CD4-positive, alpha-beta T cell (primary cell): ENCODE measurements at regions of chr12 and their contacts with region 1.

Region 1: DNA sequence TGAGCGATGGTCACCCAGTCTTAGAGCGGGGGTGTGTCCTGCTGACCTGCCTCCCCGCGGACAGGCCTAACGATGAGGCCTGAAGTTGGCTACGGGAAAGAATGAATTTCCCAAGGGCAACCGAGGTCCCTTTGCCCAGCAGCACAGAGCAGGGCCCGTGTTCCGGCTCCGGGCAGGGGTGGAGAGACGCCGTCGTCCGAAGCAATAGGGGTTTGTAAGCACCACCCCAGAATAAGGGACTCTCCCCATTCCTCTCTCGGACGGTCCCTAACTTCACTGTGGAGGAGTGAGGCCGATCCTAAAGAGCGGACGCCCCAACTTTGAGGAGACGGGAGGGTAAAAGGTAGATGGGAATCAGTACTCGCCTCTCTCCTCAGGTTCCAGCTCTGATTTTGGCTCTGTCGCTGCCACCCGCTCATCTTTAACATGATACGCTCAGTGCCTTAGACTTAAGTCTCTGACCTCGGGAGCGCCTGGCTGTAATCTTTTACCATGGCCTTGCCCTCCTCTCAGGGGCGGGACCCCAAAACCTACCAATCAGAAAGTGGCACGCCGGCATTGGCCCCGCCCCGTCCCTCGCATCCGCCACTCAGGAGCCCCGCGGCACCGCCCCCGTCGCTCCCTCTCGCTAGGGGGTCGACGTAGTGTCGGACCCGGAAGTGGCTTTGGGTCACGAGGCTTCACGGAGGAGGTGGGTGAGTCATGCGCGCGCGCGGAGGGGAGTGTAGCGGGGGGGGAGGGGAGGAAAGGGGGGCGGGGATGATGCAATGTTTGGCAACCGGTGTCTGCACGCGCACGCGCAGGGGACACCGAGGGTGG is at the start of gene DDIT3:
- DNase-seq: peak; percentile 98 to 100 (median 99)
- ATAC-seq: peak; percentile 78
- H3K4me3 ChIP-seq: peak within 1 kb of the TSS; percentile 100
- H3K4me3 Mint-ChIP-seq: peak within 1 kb of the TSS; percentile 95
- H3K27ac ChIP-seq: peak within 1 kb of the TSS; percentile 97 to 99
- H3K27ac Mint-ChIP-seq: peak within 1 kb of the TSS; percentile 100
- H3K4me1 ChIP-seq: peaks cover 67% of the 10 kb centered on the region
- H3K4me1 Mint-ChIP-seq: peaks cover 64% of the 10 kb centered on the region
- H3K27me3 ChIP-seq: no peaks in the 10 kb centered on the region
- H3K27me3 Mint-ChIP-seq: no peaks in the 10 kb centered on the region
- CTCF ChIP-seq: no peak
- total RNA-seq, gene DDIT3: 145 TPM

Region 2: GRCh38 chr12:57430931-57431720 is 89.1 kb before region 1 on chr12 and contains the start of gene R3HDM2:
- CTCF ChIA-PET with region 1: no interaction called
- POLR2A ChIA-PET with region 1: interaction called, 3 read pairs
- intact Hi-C with region 1: loop called in 1 of 2 experiments (anchors 1 kb)
- DNase-seq: peak; percentile 88 to 98 (median 95)
- ATAC-seq: peak; percentile 92
- H3K4me3 ChIP-seq: peak within 1 kb of the TSS; percentile 70
- H3K4me3 Mint-ChIP-seq: peak within 1 kb of the TSS; percentile 99
- H3K27ac ChIP-seq: peak within 1 kb of the TSS; percentile 82 to 94
- H3K27ac Mint-ChIP-seq: peak within 1 kb of the TSS; percentile 99
- H3K4me1 ChIP-seq: peaks cover 29% of the 10 kb centered on the region
- H3K4me1 Mint-ChIP-seq: peaks cover 41% of the 10 kb centered on the region
- H3K27me3 ChIP-seq: no peaks in the 10 kb centered on the region
- H3K27me3 Mint-ChIP-seq: no peaks in the 10 kb centered on the region
- CTCF ChIP-seq: no peak
- total RNA-seq, gene R3HDM2: 106 to 115 TPM

Region 3: DNA sequence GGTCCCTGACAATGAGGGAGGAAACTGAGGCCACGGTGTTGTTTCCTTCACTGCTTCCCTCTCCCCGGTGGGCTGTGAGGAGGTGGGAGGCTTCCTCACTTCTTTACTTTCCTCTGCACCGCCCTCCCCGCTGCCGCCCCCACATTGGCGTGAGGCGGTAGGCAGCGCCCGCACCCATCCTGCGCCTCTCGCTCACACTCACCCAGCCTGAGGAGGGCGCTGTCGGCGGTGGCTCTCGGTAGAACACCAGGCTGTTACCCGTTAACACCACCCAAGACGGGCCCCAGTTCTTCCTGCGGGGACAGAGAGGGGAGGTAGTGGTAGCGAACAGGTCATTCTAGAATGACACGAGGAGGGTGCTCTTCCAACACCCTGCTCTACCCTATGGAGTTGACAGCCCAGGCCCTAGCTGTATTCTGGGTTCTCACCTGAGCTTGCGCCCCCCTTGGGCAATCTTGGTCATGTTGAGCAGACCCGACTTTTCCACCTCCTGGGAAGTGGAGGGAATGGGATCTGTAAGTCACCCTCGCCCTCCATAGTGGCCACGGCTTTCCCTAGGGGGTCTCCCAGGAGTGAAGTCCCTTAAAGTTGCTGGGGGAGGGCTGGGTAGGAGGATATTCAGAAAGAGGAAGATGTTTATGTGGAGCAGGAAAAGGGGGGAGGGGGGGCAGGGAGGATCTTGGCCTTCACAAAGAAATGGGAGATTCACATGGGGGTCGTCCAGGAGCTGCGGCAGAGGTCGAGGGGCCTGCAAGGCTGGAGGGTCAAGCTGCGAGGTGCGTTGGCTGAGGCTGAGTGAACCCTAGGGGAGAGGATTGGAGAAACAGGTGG is 43.9 kb before region 1 on chr12:
- CTCF ChIA-PET with region 1: interaction called, 4 read pairs
- POLR2A ChIA-PET with region 1: interaction called, 61 read pairs
- intact Hi-C with region 1: loop called (anchors 1 to 2 kb)
- DNase-seq: peak; percentile 52 to 84 (median 64)
- ATAC-seq: peak; percentile 31
- H3K4me3 ChIP-seq: peak overlapping the region; percentile 90
- H3K4me3 Mint-ChIP-seq: peak overlapping the region; percentile 93
- H3K27ac ChIP-seq: peak overlapping the region; percentile 99
- H3K27ac Mint-ChIP-seq: peak overlapping the region; percentile 99
- H3K4me1 ChIP-seq: peaks cover 84% of the 10 kb centered on the region
- H3K4me1 Mint-ChIP-seq: peaks cover 89% of the 10 kb centered on the region
- H3K27me3 ChIP-seq: no peaks in the 10 kb centered on the region
- H3K27me3 Mint-ChIP-seq: no peaks in the 10 kb centered on the region
- CTCF ChIP-seq: peak; percentile 63

Region 4: GRCh38 chr12:57487597-57488401 is 32.5 kb before region 1 on chr12 and contains the start of gene MARS1:
- CTCF ChIA-PET with region 1: no interaction called
- POLR2A ChIA-PET with region 1: interaction called, 10 read pairs
- intact Hi-C with region 1: loop called in 1 of 2 experiments (anchors 1 kb)
- DNase-seq: peak; percentile 80 to 98 (median 88)
- ATAC-seq: peak; percentile 96
- H3K4me3 ChIP-seq: peak within 1 kb of the TSS; percentile 98
- H3K4me3 Mint-ChIP-seq: peak within 1 kb of the TSS; percentile 98
- H3K27ac ChIP-seq: peak within 1 kb of the TSS; percentile 80 to 86
- H3K27ac Mint-ChIP-seq: peak within 1 kb of the TSS; percentile 90
- H3K4me1 ChIP-seq: peaks cover 26% of the 10 kb centered on the region
- H3K4me1 Mint-ChIP-seq: peaks cover 40% of the 10 kb centered on the region
- H3K27me3 ChIP-seq: no peaks in the 10 kb centered on the region
- H3K27me3 Mint-ChIP-seq: no peaks in the 10 kb centered on the region
- CTCF ChIP-seq: no peak
- total RNA-seq, gene MARS1: 203 to 204 TPM

Region 5: DNA sequence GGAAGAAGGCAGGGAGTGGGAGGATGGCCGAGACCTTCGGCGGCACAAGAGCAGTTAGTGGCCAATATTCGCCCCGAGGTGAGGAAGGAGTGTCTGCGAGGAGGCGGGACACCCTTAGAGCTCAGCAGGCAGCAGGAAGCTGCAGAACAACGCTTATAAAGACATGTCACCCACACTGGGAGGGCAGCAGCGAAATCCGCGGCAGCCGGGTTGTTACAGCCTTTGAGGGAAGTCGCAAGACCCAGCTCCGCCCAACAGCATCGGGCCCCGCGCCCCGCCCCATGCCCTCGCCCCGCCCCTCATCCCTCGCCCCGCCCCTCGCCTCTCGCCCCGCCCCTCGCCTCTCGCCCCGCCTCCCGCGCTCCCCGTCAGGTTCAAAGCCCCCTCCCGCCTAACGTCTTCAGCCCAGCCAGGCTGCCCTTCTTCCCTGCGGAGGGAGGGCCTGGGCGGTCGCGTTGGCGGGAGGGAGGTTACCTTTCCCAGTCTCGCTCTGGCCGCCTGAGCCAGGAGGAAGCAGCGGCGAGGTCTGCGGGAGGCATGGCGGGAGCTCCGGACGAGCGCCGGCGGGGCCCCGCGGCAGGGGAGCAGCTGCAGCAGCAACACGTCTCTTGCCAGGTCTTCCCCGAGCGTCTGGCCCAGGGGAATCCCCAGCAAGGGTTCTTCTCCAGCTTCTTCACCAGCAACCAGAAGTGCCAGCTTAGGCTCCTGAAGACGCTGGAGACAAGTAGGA is 421.1 kb after region 1 on chr12 and contains the start of gene ATP23:
- CTCF ChIA-PET with region 1: no interaction called
- POLR2A ChIA-PET with region 1: no interaction called
- intact Hi-C with region 1: loop called in 1 of 2 experiments (anchors 5 kb)
- DNase-seq: peak; percentile 82 to 96 (median 89)
- ATAC-seq: peak; percentile 91
- H3K4me3 ChIP-seq: peak within 1 kb of the TSS; percentile 71
- H3K4me3 Mint-ChIP-seq: peak within 1 kb of the TSS; percentile 96
- H3K27ac ChIP-seq: peak within 1 kb of the TSS; percentile 82 to 87
- H3K27ac Mint-ChIP-seq: peak within 1 kb of the TSS; percentile 89
- H3K4me1 ChIP-seq: peaks cover 20% of the 10 kb centered on the region
- H3K4me1 Mint-ChIP-seq: peaks cover 54% of the 10 kb centered on the region
- H3K27me3 ChIP-seq: no peaks in the 10 kb centered on the region
- H3K27me3 Mint-ChIP-seq: no peaks in the 10 kb centered on the region
- CTCF ChIP-seq: no peak
- total RNA-seq, gene ATP23: 5.3 to 5.6 TPM